PC-9 (cell line): ENCODE measurements at regions of chr12 and their contacts with region 1.

Region 1: DNA sequence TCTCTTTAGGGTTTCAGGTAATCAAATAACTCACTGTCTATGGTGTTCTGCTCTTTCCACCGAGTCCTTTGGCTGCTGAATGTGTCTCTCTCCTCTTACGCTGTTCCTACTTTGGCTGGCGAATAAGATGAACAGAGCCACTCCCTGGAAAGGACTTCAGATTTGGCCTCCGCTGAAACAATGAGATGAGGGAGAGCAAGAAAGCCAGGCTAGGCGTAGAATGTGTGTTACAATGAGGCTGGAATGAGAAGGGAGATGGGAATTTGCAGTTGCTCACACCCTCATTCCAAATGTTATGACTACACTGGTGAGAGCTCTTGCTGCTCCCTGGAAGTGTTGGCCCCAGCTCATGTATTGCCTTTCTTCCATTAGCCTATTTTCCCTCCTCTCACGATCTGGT is at the start of gene MFAP5:
- DNase-seq: peak in 1 of 2 experiments; percentile 56
- H3K4me3 ChIP-seq: no peak within 1 kb of the TSS
- H3K27ac ChIP-seq: no peak within 1 kb of the TSS
- H3K4me1 ChIP-seq: 0 out of 2 replicates have a peak, but pooled peaks cover 7% of the 10 kb centered on the region
- H3K27me3 ChIP-seq: peaks cover 4% of the 10 kb centered on the region; the same call in 1 of the 2 replicates
- CTCF ChIP-seq: no peak
- total RNA-seq, gene MFAP5: 14.6 and 18.9 TPM in 2 replicates

Region 2: GRCh38 chr12:8544295-8544694 is 118.3 kb before region 1 on chr12:
- CTCF ChIA-PET with region 1: interaction called, 10 read pairs
- POLR2A ChIA-PET with region 1: no interaction called
- intact Hi-C with region 1: loop called (anchors 2 kb)
- DNase-seq: peak; percentile 48 to 75
- H3K4me3 ChIP-seq: no peak overlapping the region
- H3K27ac ChIP-seq: no peak overlapping the region
- H3K4me1 ChIP-seq: no peaks in the 10 kb centered on the region
- H3K27me3 ChIP-seq: peaks cover 11% of the 10 kb centered on the region; the same call in 1 of the 2 replicates
- CTCF ChIP-seq: peak; percentile 99

Region 3: GRCh38 chr12:8629486-8630033 is 33.0 kb before region 1 on chr12:
- CTCF ChIA-PET with region 1: no interaction called
- POLR2A ChIA-PET with region 1: no interaction called
- intact Hi-C with region 1: no loop called
- DNase-seq: no peak
- H3K4me3 ChIP-seq: no peak overlapping the region
- H3K27ac ChIP-seq: no peak overlapping the region
- H3K4me1 ChIP-seq: no peaks in the 10 kb centered on the region
- H3K27me3 ChIP-seq: no peaks in the 10 kb centered on the region
- CTCF ChIP-seq: no peak

Region 4: DNA sequence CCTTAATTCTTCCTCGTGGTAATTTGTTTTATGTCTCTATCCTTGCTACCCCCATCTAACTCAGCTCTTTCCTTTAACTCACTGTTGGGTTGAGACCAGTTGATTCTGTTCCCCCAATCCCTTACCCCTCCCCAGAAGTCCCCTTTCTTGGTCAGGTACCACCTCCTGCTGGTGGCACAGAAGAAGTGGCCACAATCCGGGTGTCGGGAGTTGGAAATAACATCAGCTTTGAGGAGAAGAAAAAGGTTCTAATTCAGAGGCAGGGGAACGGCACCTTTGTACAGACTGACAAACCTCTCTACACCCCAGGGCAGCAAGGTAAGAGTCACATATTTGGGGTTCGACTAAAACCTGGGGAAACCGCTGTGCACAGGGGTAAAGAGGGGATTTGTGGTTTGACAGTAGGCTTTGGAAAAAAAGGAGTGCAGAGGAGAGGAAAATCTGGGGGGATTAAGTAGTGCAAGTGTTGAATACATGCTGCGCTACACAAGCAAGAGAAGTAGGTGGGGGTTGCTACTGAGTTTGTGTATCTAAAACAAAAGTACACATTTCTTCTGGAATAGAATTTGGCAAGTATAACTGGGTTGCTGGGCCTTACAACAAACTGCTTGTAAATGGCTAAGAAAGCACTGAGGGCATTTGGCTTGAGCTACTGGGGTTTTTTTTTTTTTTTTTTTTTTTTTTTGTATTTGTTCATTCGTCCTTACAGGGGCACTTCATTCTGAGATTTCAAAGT is 161.1 kb after region 1 on chr12:
- CTCF ChIA-PET with region 1: interaction called, 5 read pairs
- POLR2A ChIA-PET with region 1: interaction called, 7 read pairs
- intact Hi-C with region 1: loop called (anchors 1 kb)
- DNase-seq: no peak
- H3K4me3 ChIP-seq: no peak overlapping the region
- H3K27ac ChIP-seq: no peak overlapping the region
- H3K4me1 ChIP-seq: peaks cover 18% of the 10 kb centered on the region
- H3K27me3 ChIP-seq: no peaks in the 10 kb centered on the region
- CTCF ChIP-seq: peak; percentile 46; the same call in 1 of the 2 replicates

Region 5: GRCh38 chr12:8890313-8891085 is 227.9 kb after region 1 on chr12:
- CTCF ChIA-PET with region 1: interaction called, 27 read pairs
- POLR2A ChIA-PET with region 1: no interaction called
- intact Hi-C with region 1: loop called (anchors 1 kb)
- DNase-seq: peak in 1 of 2 experiments; percentile 63
- H3K4me3 ChIP-seq: peak overlapping the region; percentile 43; the same call in 1 of the 2 replicates
- H3K27ac ChIP-seq: no peak overlapping the region
- H3K4me1 ChIP-seq: 0 out of 2 replicates have a peak, but pooled peaks cover 3% of the 10 kb centered on the region
- H3K27me3 ChIP-seq: no peaks in the 10 kb centered on the region
- CTCF ChIP-seq: peak; percentile 95

Region 6: DNA sequence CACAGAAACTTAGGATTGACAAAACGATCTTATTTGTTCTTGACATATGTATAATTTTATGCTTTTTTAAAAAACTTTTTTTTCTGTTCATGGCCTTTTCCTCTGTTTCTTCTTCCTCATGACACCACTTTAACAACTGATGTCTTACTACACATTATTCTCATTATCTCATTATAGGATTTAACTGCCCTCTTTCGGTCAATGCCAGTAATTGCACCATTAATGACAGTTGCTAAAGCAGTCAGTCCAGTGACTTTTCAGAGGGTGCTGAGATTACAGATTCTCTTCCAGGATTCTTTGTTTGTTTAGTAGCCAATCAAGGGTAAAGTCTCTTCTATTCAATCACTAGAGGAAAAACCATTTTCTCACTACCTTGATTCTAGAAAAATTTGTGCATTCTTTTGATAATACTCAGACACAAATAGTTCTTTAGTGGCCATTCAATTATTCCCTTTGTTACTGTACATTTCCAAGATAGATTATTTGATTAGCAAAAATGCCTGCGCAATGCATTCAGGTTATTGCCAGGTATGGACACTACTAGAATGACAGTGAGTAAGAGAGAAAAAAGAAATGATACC is 376.9 kb after region 1 on chr12:
- CTCF ChIA-PET with region 1: interaction called, 19 read pairs
- POLR2A ChIA-PET with region 1: no interaction called
- intact Hi-C with region 1: loop called (anchors 1 kb)
- DNase-seq: peak in 1 of 2 experiments; percentile 52
- H3K4me3 ChIP-seq: no peak overlapping the region
- H3K27ac ChIP-seq: no peak overlapping the region
- H3K4me1 ChIP-seq: no peaks in the 10 kb centered on the region
- H3K27me3 ChIP-seq: no peaks in the 10 kb centered on the region
- CTCF ChIP-seq: peak; percentile 85

Region 7: GRCh38 chr12:9064201-9064814 is 401.7 kb after region 1 on chr12:
- CTCF ChIA-PET with region 1: interaction called, 11 read pairs
- POLR2A ChIA-PET with region 1: no interaction called
- intact Hi-C with region 1: no loop called
- DNase-seq: peak; percentile 55 to 75
- H3K4me3 ChIP-seq: peak overlapping the region; percentile 82
- H3K27ac ChIP-seq: peak overlapping the region; percentile 56
- H3K4me1 ChIP-seq: peaks cover 6% of the 10 kb centered on the region
- H3K27me3 ChIP-seq: no peaks in the 10 kb centered on the region; the same call in 1 of the 2 replicates
- CTCF ChIP-seq: peak; percentile 49; the same call in 1 of the 2 replicates